ENCODE measurements at regions of chr4 and their contacts with region 1.

Region 1: GRCh38 chr4:184474263-184475095 is at the start of gene IRF2:
- DNase-seq: peak; percentile 97 to 98
- ATAC-seq: peak; percentile 91 to 95 (median 92)
- H3K4me3 ChIP-seq: peak within 1 kb of the TSS; percentile 65 to 98 (median 87)
- H3K27ac ChIP-seq: peak within 1 kb of the TSS; percentile 94 to 99 (median 98)
- H3K4me1 ChIP-seq: peaks cover 0 to 70% (median 57%) of the 10 kb centered on the region in 9 donors
- H3K27me3 ChIP-seq: no peaks in the 10 kb centered on the region
- CTCF ChIP-seq: peak in 2 of 9 donors; percentile 19 to 23
- total RNA-seq, gene IRF2: 18.3 to 41.4 (median 29.0) TPM

Region 2: GRCh38 chr4:184282251-184282713 is 192.2 kb before region 1 on chr4:
- intact Hi-C with region 1: loop called in 4 of 10 experiments (anchors 5 to 10 kb)
- DNase-seq: no peak
- ATAC-seq: peak in 5 of 8 donors; percentile 40 to 61 (median 56)
- H3K4me3 ChIP-seq: no peak overlapping the region
- H3K27ac ChIP-seq: peak overlapping the region in 3 of 10 donors; percentile 29 to 56 (median 36)
- H3K4me1 ChIP-seq: peaks cover 0 to 31% (median 19%) of the 10 kb centered on the region in 9 donors
- H3K27me3 ChIP-seq: no peaks in the 10 kb centered on the region
- CTCF ChIP-seq: peak in 3 of 9 donors; percentile 14 to 24 (median 16)

Region 3: DNA sequence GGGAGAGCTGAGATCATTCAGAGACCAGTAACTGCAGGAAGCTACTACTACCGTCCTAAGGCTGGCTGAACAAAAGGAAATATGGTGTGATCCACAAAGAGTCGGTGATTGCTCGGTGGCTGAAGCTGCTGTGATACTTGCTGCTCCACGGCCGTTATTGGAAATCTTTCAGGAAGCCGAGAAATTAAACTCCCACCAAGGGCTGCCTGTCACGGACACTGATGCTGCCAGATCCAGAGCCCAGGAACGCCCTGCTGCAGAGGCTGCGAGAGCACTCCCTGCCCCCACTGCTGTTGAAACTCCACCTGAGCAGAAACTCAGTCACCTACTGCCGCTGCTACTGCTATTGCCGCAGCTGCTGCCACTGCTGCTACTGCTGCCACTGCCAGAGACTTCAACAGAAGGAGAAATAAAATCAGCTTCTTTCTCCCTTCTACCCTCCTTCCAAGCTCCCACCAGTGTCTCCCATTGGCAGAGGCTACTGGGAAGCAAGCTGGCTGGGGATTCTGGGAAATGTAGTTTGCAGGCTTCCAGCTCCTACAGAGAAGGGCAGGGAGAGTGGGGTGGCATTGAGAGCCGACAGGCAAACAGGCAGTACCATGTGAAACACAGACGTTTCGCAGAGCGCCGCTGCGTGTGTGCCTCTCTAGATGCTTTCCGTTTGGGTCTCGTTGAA is 130.8 kb before region 1 on chr4:
- intact Hi-C with region 1: loop called in 6 of 10 experiments (anchors 2 to 10 kb)
- DNase-seq: peak; percentile 54 to 84
- ATAC-seq: peak; percentile 73 to 88 (median 84)
- H3K4me3 ChIP-seq: peak overlapping the region; percentile 33 to 78 (median 60)
- H3K27ac ChIP-seq: peak overlapping the region; percentile 1 to 95 (median 84)
- H3K4me1 ChIP-seq: peaks cover 10 to 76% (median 47%) of the 10 kb centered on the region in 9 donors
- H3K27me3 ChIP-seq: no peaks in the 10 kb centered on the region
- CTCF ChIP-seq: no peak

Region 4: DNA sequence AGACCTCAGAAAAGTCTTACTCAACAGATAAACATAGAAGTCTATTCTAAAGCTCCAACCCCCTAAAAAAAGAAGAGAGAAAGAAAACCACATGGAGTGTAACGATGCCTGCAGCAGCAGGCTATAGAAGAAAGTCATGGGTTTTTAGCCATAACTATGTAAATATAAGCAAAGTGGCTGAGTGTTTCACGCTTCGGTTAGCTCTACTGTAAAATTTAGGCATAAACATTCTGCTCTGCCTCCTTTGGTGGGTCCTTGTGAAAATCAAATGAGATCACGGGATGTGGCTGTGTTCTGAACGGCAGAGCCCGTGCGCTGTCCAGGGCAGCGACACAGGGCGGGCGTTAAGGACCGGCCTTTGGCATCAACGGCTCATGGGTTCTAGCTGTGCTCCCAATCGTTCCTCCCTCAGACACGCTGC is 78.5 kb before region 1 on chr4:
- intact Hi-C with region 1: loop called in 1 of 10 experiments (anchors 5 kb)
- DNase-seq: no peak
- ATAC-seq: peak in 1 of 8 donors; percentile 11
- H3K4me3 ChIP-seq: no peak overlapping the region
- H3K27ac ChIP-seq: peak overlapping the region; percentile 2 to 88 (median 64)
- H3K4me1 ChIP-seq: peaks cover under 1 to 98% (median 40%) of the 10 kb centered on the region in 9 donors
- H3K27me3 ChIP-seq: no peaks in the 10 kb centered on the region
- CTCF ChIP-seq: no peak

Region 5: GRCh38 chr4:184417802-184418511 is 56.5 kb before region 1 on chr4:
- intact Hi-C with region 1: loop called in 5 of 10 experiments (anchors 5 to 10 kb)
- DNase-seq: no peak
- ATAC-seq: peak in 6 of 8 donors; percentile 23 to 50 (median 32)
- H3K4me3 ChIP-seq: peak overlapping the region in 7 of 10 donors; percentile 4 to 43 (median 38)
- H3K27ac ChIP-seq: peak overlapping the region in 9 of 10 donors; percentile 56 to 89 (median 70)
- H3K4me1 ChIP-seq: peaks cover 2 to 81% (median 56%) of the 10 kb centered on the region in 9 donors
- H3K27me3 ChIP-seq: no peaks in the 10 kb centered on the region
- CTCF ChIP-seq: no peak